ENCODE measurements at regions of chr16 and their contacts with region 1.

Region 1: DNA sequence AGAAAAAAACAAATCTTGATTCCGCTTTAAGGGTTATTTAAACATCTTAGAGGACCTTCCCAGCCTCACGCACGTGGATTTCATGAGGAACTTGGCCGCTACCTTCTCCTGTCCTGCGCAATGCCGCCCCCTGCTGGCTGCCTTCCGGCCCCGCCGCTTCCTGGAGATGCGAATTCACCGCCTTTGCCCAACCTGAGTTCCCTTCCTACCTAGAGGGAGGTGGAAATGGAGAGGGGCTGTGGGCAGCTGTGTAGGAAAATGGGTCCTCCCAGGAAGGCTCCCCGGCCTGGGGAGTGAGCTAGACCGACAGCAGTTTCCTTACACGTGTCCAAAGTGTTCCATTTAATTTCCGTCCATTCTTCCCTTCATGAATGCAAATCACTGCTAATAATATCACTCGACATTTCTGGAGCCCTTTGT is 1.0 kb upstream of the ABCC12 start:
- DNase-seq: peak; percentile 63
- H3K4me3 ChIP-seq: no peak overlapping the region
- H3K27ac ChIP-seq: no peak overlapping the region
- H3K4me1 ChIP-seq: no peaks in the 10 kb centered on the region
- H3K27me3 ChIP-seq: peaks cover 0 to 3% of the 10 kb centered on the region in 2 experiments
- CTCF ChIP-seq: peak; percentile 94 to 95
- POLR2A ChIP-seq: no peak

Region 2: DNA sequence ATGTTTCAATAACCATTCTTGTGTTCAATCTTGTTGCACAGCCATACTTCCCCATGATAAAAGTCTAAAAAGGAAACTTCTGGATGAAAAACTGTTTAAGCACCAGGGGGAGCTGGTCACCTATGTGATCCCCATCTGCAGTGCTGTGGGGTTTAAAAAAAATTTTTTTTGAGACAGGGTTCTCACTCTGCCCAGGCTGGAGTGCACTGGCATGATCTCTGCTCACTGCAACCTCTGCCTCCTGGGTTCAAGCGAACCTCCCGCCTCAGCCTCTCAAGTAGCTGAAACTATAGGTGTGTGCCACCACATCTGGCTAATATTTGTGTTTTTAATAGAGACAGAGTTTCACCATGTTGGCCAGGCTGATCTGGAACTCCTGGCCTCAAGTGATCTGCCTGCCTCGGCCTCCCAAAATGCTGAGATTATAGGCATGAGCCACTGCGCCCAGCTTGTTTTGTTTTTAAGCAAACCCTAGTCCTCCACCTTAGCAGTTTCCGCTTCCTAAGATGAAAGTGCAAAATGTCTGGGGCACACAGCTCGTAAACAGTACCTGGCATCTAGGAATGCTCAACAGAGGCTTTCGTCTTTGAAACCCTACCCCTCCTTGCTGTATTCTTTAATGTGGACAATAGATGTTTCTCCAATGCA is 1208.8 kb before region 1 on chr16:
- CTCF ChIA-PET with region 1: interaction called, 5 read pairs
- POLR2A ChIA-PET with region 1: no interaction called
- dilution Hi-C with region 1: no loop called
- intact Hi-C with region 1: loop called (anchors 2 kb)
- DNase-seq: peak; percentile 46
- H3K4me3 ChIP-seq: no peak overlapping the region
- H3K27ac ChIP-seq: no peak overlapping the region
- H3K4me1 ChIP-seq: no peaks in the 10 kb centered on the region
- H3K27me3 ChIP-seq: no peaks in the 10 kb centered on the region
- CTCF ChIP-seq: peak; percentile 28 to 50
- POLR2A ChIP-seq: no peak

Region 3: GRCh38 chr16:47037746-47038458 is 1118.9 kb before region 1 on chr16:
- CTCF ChIA-PET with region 1: interaction called, 21 read pairs
- POLR2A ChIA-PET with region 1: no interaction called
- dilution Hi-C with region 1: no loop called
- intact Hi-C with region 1: loop called (anchors 1 kb)
- DNase-seq: peak; percentile 76
- H3K4me3 ChIP-seq: peak overlapping the region; percentile 36 to 64 (median 38)
- H3K27ac ChIP-seq: no peak overlapping the region
- H3K4me1 ChIP-seq: no peaks in the 10 kb centered on the region
- H3K27me3 ChIP-seq: peaks cover 0 to 2% of the 10 kb centered on the region in 2 experiments
- CTCF ChIP-seq: peak; percentile 92 to 95
- POLR2A ChIP-seq: no peak

Region 4: GRCh38 chr16:47258874-47259461 is 897.8 kb before region 1 on chr16:
- CTCF ChIA-PET with region 1: no interaction called
- POLR2A ChIA-PET with region 1: no interaction called
- dilution Hi-C with region 1: no loop called
- intact Hi-C with region 1: loop called (anchors 1 kb)
- DNase-seq: peak; percentile 33
- H3K4me3 ChIP-seq: no peak overlapping the region
- H3K27ac ChIP-seq: no peak overlapping the region
- H3K4me1 ChIP-seq: no peaks in the 10 kb centered on the region
- H3K27me3 ChIP-seq: no peaks in the 10 kb centered on the region
- CTCF ChIP-seq: peak; percentile 61 to 69
- POLR2A ChIP-seq: no peak

Region 5: DNA sequence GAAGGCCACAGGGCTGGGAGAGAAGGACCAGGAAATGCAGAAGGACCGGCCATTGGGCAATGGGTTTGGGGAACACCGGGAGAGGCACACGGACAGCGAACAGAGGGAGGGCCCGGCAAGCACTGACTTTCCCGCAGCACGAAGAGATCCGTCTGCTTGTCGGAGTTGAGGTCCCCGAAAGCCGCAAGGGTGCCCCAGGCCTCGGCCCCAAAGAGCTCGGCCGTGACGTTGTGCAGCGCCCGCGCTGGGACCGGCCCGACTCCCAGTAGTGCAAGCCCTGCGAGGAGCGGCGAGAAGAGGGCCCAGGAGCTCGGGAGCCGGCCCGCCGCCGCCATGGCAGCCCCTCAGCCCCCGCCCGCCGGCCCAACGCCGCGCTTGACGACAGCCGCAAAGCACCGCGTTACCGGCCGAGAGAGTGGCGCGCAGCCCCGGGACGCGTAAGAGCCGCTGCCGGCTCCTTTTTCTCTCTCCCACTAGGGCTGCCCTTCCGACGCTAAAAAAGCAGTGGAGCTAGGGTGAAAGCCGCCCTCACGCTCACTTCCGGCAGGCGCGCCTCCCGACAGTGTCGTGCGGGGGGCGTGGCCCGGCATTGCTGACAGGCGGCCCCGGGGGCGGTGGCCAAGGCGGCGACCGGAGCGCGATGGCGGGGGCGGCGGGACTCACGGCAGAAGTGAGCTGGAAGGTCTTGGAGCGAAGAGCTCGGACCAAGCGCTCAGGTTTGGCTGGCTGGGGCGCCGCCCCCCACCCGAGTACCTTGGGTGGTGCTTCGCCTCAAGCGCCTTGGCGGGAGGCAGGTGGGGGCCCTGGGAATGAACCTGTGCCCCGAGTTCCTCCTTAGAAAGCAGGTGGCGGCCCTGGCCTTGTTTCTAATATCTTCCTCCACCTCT is 695.8 kb before region 1 on chr16 and contains the starts of genes ITFG1 and PHKB:
- CTCF ChIA-PET with region 1: no interaction called
- POLR2A ChIA-PET with region 1: no interaction called
- dilution Hi-C with region 1: no loop called
- intact Hi-C with region 1: loop called (anchors 5 kb)
- DNase-seq: peak; percentile 90
- H3K4me3 ChIP-seq: peak within 1 kb of the TSS; percentile 67 to 99 (median 77)
- H3K27ac ChIP-seq: peak within 1 kb of the TSS; percentile 99
- H3K4me1 ChIP-seq: peaks cover 31% of the 10 kb centered on the region
- H3K27me3 ChIP-seq: no peaks in the 10 kb centered on the region
- CTCF ChIP-seq: no peak
- POLR2A ChIP-seq: peak; percentile 82
- total RNA-seq, gene ITFG1: 38.0 and 44.2 TPM in 2 replicates
- total RNA-seq, gene PHKB: 60.9 and 61.0 TPM in 2 replicates

Region 6: GRCh38 chr16:48054881-48055601 is 101.8 kb before region 1 on chr16:
- CTCF ChIA-PET with region 1: interaction called, 3 read pairs
- POLR2A ChIA-PET with region 1: no interaction called
- dilution Hi-C with region 1: no loop called
- intact Hi-C with region 1: loop called (anchors 2 kb)
- DNase-seq: peak; percentile 45
- H3K4me3 ChIP-seq: no peak overlapping the region
- H3K27ac ChIP-seq: no peak overlapping the region
- H3K4me1 ChIP-seq: no peaks in the 10 kb centered on the region
- H3K27me3 ChIP-seq: peaks cover 0 to 2% of the 10 kb centered on the region in 2 experiments
- CTCF ChIP-seq: peak; percentile 76 to 87
- POLR2A ChIP-seq: no peak

Region 7: GRCh38 chr16:48117217-48118105 is 39.3 kb before region 1 on chr16:
- CTCF ChIA-PET with region 1: no interaction called
- POLR2A ChIA-PET with region 1: no interaction called
- dilution Hi-C with region 1: no loop called
- intact Hi-C with region 1: loop called (anchors 2 kb)
- DNase-seq: peak; percentile 37
- H3K4me3 ChIP-seq: no peak overlapping the region
- H3K27ac ChIP-seq: no peak overlapping the region
- H3K4me1 ChIP-seq: no peaks in the 10 kb centered on the region
- H3K27me3 ChIP-seq: no peaks in the 10 kb centered on the region
- CTCF ChIP-seq: peak; percentile 79 to 88
- POLR2A ChIP-seq: no peak